ENCODE measurements at regions of chr3 and their contacts with region 1.

Region 1: DNA sequence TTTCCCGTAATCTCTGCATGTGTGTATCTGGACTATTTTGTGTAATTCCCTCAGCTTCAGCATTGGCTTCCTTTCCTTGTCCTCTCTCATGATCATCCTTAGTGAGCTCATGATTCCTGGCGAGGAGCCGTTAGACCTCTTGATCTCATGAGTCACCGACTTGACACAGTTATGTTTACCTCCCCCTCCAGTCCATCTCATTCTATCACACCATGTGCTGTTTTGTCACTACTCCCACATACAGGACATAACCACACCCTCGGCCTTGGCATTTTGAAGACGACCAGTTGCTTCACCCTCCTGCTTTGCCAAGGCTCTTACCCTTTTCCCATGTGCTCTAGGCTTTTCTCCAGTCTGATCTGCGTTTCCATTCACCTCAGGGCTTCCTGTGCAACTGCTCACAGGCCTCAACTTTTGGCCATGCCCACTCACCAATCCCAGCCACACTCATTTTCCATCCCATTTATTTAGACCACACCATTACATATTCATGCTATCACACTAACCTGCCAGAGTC is 41.5 kb downstream of the CP start:
- DNase-seq: peak; percentile 81

Region 2: DNA sequence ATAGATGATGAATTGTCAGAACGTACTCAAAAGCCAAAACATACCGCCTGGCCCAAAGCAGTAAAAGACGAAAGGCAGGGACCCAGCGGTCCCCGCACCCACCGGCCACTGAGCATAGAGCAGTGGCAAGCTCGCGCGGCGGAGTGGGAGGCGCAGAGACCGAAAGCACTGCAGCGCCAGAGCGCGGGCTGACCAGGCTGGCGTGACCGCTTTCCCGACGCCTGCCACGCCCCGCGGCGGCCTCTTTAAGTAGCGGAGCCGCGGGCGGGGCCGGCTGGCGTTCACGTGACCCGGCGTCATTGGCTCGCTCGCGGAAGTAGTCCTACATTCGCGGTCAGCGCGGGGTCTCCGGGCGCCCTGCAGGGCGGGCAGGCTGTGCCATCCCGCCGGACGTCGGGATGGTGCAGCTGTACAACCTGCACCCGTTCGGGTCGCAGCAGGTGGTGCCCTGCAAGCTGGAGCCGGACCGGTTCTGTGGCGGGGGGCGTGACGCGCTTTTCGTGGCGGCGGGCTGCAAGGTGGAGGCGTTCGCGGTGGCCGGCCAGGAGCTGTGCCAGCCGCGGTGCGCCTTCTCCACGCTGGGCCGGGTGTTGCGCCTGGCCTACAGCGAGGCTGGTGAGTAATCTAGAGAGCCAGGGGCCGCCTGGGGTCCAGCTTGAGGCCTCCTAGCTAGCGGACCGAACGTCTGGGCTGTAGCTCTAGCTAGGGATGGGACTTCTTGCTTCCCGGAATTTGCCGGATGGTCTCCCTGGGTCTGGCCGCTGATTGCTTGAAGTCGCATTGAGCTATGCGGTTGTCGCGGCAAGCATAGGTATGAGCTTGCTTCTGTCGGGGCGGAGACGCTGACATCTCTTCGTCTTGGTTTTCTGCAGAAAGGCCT is 50.5 kb before region 1 on chr3 and contains the start of gene HPS3:
- intact Hi-C with region 1: loop called (anchors 5 kb)
- DNase-seq: peak; percentile 97
- total RNA-seq, gene HPS3: 6.2 TPM

Region 3: GRCh38 chr3:149224736-149225594 is 44.9 kb after region 1 on chr3:
- intact Hi-C with region 1: loop called (anchors 5 kb)
- DNase-seq: no peak

Measured in cardiac septum (tissue), 1 donor.